Heart right ventricle (tissue), 16 donors: ENCODE measurements at regions of chr7 and their contacts with region 1.

Region 1: GRCh38 chr7:130486114-130486958 is 5.5 kb upstream of the MEST start:
- DNase-seq: peak; percentile 34 to 53
- ATAC-seq: peak; percentile 20 to 82 (median 69)
- H3K4me3 ChIP-seq: peak overlapping the region; percentile 16 to 62 (median 54)
- H3K27ac ChIP-seq: no peak overlapping the region
- H3K4me1 ChIP-seq: peaks cover 4 to 35% (median 20%) of the 10 kb centered on the region in 9 donors
- H3K27me3 ChIP-seq: peaks cover 0 to 70% (median 32%) of the 10 kb centered on the region in 7 donors
- CTCF ChIP-seq: peak; percentile 53 to 83 (median 73)

Region 2: DNA sequence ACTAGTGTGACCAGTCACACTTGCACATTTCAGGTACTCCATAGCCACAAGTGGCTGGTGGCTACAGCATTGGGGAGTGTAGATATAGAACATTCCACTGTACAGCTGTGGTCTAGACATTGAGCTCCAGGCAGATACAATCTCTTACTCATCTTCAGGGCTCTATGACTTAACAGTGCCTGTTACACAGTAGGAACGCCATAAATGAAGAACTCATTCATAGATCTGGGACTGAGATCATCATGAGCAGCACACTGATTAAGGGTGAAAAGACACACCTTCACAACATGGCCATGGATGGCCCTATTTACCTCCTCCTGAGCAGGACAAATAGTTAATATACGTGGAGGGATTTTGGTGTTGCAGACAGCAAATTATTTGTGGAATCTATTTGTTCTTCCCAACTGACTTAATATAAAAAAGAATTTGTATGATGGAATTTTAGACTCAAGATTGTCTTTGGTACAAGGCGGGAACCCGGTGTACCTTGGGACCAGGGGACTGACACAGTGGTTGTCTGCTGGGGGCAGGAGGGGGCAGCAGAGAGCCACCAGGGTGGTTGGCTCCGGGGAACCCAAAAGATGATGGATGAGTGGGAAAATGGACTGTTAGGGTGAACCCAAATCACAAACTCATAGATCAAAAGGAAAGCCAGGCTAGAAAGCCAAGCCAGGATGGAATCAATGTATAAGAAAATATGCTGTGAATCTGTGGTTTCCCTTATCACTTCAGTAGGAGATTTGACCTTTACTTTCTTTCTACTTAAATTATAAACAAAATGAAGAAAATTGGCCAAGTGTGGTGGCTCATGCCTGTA is 243.9 kb before region 1 on chr7:
- intact Hi-C with region 1: loop called in 1 of 10 experiments (anchors 10 kb)
- DNase-seq: peak; percentile 49 to 63
- ATAC-seq: peak in 6 of 8 donors; percentile 65 to 81 (median 79)
- H3K4me3 ChIP-seq: no peak overlapping the region
- H3K27ac ChIP-seq: no peak overlapping the region
- H3K4me1 ChIP-seq: peaks cover 0 to 13% (median 0%) of the 10 kb centered on the region in 9 donors
- H3K27me3 ChIP-seq: no peaks in the 10 kb centered on the region
- CTCF ChIP-seq: peak; percentile 53 to 91 (median 80)

Region 3: GRCh38 chr7:130277763-130278643 is 208.3 kb before region 1 on chr7:
- intact Hi-C with region 1: loop called in 4 of 10 experiments (anchors 5 to 10 kb)
- DNase-seq: peak; percentile 38 to 65
- ATAC-seq: peak; percentile 69 to 89 (median 80)
- H3K4me3 ChIP-seq: no peak overlapping the region
- H3K27ac ChIP-seq: no peak overlapping the region
- H3K4me1 ChIP-seq: peaks cover 0 to 27% (median 3%) of the 10 kb centered on the region in 9 donors
- H3K27me3 ChIP-seq: peaks cover 0 to 28% (median 16%) of the 10 kb centered on the region in 7 donors
- CTCF ChIP-seq: peak; percentile 23 to 79 (median 65)

Region 4: DNA sequence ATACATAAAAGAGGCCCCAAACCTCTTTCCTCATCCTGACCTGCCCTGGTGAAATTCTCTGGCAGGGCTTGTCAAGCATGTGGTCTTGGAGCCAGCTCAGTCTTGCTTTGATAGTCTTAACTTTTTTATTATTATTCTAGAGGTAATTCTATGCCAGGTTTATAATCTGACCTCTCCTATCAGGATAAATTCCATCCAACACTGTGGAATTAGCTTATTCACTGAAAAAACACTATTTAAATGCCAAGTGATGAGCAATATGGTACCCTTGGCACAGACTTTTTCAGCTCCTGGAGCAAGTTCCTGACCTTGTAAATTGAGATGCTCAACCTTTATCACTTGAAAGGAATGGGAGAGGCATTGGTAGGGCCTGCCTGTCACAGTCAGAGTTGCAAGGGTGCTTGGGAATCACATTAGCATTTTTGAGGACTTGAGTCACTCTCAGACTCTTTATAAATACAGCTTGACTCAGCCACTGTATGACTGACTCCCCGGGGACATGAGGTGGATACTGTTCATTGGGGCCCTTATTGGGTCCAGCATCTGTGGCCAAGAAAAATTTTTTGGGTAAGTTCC is 193.6 kb before region 1 on chr7 and contains the start of gene CPA4:
- intact Hi-C with region 1: loop called in 1 of 10 experiments (anchors 5 kb)
- DNase-seq: no peak
- ATAC-seq: peak in 5 of 8 donors; percentile 35 to 77 (median 70)
- H3K4me3 ChIP-seq: no peak within 1 kb of the TSS
- H3K27ac ChIP-seq: no peak within 1 kb of the TSS
- H3K4me1 ChIP-seq: peaks cover 0 to 13% (median 0%) of the 10 kb centered on the region in 9 donors
- H3K27me3 ChIP-seq: no peaks in the 10 kb centered on the region
- CTCF ChIP-seq: no peak
- total RNA-seq, gene CPA4: 0.27 to 2.7 (median 0.47) TPM in 4 of 10 donors, not detected in the others

Region 5: DNA sequence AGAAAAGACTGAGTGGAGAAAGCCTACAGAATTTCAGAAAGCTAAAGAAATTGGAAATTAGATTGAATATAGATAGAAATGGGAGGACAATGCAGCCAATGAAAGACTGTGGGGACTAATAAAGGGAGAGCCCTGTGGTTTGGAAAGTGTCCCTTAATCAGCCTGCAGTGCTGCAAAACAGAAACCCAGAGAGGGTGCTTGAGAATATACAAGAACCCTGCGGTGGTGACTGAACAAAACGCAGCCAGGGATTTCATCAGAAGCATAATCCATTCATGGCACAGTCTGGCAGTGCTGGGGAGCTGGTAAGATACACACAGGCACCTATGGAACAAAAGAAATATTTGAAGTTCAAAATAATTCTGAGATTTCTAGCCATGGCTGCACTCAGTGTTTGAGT is 64.7 kb before region 1 on chr7:
- intact Hi-C with region 1: loop called in 1 of 10 experiments (anchors 10 kb)
- DNase-seq: no peak
- ATAC-seq: no peak
- H3K4me3 ChIP-seq: no peak overlapping the region
- H3K27ac ChIP-seq: no peak overlapping the region
- H3K4me1 ChIP-seq: peaks cover 0 to 8% (median 0%) of the 10 kb centered on the region in 9 donors
- H3K27me3 ChIP-seq: no peaks in the 10 kb centered on the region
- CTCF ChIP-seq: no peak

Region 6: GRCh38 chr7:130695840-130696239 is 209.5 kb after region 1 on chr7:
- intact Hi-C with region 1: loop called in 2 of 10 experiments (anchors 10 kb)
- DNase-seq: no peak
- ATAC-seq: no peak
- H3K4me3 ChIP-seq: no peak overlapping the region
- H3K27ac ChIP-seq: no peak overlapping the region
- H3K4me1 ChIP-seq: no peaks in the 10 kb centered on the region
- H3K27me3 ChIP-seq: no peaks in the 10 kb centered on the region
- CTCF ChIP-seq: peak; percentile 27 to 64 (median 50)

Region 7: DNA sequence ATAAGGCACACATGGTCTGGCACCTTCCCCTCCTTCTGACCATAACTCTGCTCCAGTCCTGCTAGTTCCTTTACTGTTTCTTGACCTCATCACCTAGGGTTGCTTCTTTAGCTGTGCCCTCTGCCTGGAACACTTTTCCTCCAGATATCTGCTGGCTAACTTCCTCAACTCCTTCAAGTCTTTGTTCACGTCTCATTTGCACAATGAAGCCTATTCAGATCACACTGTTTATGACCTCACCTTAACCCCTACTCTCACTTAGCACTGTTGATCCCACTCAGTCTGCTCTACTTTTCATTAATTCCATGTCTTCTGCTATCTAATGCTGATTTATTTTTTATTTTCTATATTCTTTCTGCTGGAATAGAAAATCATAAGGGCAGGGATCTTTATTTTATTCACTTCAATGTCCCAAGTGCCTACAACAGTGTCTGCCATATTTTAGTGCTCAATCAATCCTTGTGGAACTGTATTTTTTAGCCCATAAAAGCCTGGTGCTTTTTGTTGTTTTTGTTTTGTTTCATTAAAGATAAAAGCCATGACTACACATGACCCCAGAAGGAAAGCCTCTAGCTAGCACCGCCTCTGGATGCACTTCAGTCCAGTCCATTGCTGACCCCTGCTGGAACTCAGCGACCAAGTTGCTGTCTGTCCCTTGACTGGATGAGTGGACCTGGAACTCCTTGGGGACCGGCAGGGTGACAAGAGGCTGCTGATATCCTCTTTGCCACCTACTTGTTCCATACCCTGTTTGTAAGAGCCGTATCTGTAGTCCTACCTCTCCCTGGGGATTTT is 235.3 kb after region 1 on chr7:
- intact Hi-C with region 1: loop called in 6 of 10 experiments (anchors 1 to 10 kb)
- DNase-seq: peak; percentile 70 to 82
- ATAC-seq: peak; percentile 93 to 98 (median 96)
- H3K4me3 ChIP-seq: no peak overlapping the region
- H3K27ac ChIP-seq: no peak overlapping the region
- H3K4me1 ChIP-seq: peaks cover 0 to 6% (median 0%) of the 10 kb centered on the region in 9 donors
- H3K27me3 ChIP-seq: peaks cover 0 to 28% (median 3%) of the 10 kb centered on the region in 7 donors
- CTCF ChIP-seq: peak; percentile 36 to 84 (median 73)